ENCODE measurements at regions of chr3 and their contacts with region 1.

Region 1: DNA sequence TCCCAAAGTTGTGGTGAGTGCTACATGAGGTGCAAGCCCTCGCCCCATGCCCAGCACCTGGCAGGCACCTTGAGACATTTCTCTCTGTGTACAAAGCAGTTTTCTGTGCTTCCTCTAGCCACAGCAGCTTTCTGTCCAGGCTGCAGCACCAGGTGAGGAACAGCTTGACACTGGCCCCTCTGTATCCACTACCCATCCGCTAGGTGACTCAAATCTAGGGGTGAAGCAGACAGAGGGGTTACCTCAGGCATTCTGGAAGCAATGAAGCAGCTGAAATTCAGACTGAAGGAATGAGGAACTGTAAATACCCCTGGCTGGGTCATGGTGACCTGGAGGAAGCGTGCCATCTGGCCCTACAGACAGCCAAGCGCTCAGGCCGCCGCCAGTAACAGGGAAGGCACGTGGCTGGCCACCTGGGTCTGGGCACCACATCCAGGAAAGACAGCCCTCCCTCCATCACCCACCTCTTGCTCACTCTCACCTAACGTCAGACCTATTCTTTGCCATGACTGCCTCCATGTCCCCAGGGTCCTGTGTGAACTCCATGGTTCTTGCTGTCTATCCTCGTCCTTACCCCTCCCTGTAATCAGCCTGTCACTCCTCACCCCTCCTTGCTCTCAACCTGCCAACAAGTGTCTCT is 6.5 kb downstream of the CISH start:
- DNase-seq: no peak
- H3K4me3 ChIP-seq: no peak overlapping the region
- CTCF ChIP-seq: no peak

Region 2: GRCh38 chr3:50350527-50351322 is 254.3 kb before region 1 on chr3 and contains the starts of genes CYB561D2 and NPRL2:
- in situ Hi-C with region 1: loop called (anchors 5 kb)
- DNase-seq: peak; percentile 74
- H3K4me3 ChIP-seq: peak within 1 kb of the TSS; percentile 83
- CTCF ChIP-seq: no peak

Region 3: DNA sequence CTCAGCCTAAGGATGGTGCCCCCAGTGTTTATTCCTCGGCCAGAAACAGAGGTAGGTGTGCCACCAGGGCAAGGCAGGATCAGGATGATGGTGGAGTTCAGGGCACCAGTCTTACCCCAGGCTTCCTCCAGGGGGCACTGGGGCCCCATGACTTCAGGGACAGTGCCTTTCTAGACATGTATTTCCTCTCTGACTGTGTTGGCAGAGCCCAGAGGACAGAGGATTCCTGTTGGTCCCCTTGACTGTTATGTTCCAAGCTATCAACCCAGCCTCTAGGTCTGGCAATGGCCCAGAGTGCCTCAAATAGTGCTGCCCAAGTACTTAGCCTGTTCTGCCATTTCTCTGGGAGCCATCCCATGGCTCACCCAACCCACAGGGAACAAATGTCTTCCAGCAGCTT is 32.9 kb before region 1 on chr3:
- in situ Hi-C with region 1: loop called (anchors 5 kb)
- DNase-seq: peak; percentile 35
- H3K4me3 ChIP-seq: no peak overlapping the region
- CTCF ChIP-seq: peak; percentile 88

Measured in astrocyte of the cerebellum (primary cell).